PC-3 (cell line): ENCODE measurements at regions of chr3 and their contacts with region 1.

Region 1: GRCh38 chr3:190017521-190018288 is 103.0 kb downstream of the P3H2 start:
- DNase-seq: peak; percentile 90
- ATAC-seq: peak; percentile 74
- H3K4me3 ChIP-seq: peak overlapping the region; percentile 33; the same call in 1 of the 2 replicates
- H3K27ac ChIP-seq: no peak overlapping the region
- H3K4me1 ChIP-seq: peaks cover 28% of the 10 kb centered on the region
- H3K27me3 ChIP-seq: no peaks in the 10 kb centered on the region
- CTCF ChIP-seq: peak; percentile 86

Region 2: DNA sequence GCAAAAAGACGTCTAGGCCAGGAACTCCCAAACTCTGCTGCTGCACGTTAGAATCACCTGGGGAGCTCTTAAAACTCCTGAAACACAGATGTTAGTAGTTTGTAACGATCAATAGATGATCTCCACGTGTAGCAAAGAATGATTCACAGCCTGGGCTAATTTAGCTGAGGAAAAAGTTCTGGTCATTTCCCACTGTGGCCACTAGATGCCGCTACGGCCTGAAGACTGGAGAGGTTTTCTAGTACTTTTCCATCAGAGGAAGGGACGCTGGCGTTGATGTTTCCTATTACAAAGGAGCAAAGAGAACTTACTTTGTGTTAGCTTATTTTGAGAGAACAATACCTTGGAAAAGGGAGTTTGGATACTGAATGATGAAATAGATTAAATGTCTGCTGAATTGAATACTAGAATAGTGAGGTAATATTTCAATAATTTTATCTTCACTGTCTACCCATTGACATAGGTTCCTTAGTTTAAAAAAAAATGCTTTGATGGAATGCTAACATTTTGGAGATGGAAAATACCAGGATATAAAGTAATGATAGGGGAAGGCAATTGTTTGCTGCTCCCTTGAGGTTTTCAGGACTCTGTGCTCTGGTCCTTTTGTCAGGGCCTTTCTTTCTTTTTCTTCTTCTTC is 56.1 kb before region 1 on chr3:
- CTCF ChIA-PET with region 1: interaction called, 8 read pairs
- POLR2A ChIA-PET with region 1: no interaction called
- intact Hi-C with region 1: loop called (anchors 1 kb)
- DNase-seq: peak; percentile 95
- ATAC-seq: peak; percentile 82
- H3K4me3 ChIP-seq: no peak overlapping the region
- H3K27ac ChIP-seq: no peak overlapping the region
- H3K4me1 ChIP-seq: peaks cover 4% of the 10 kb centered on the region; the same call in 1 of the 2 replicates
- H3K27me3 ChIP-seq: no peaks in the 10 kb centered on the region
- CTCF ChIP-seq: peak; percentile 95

Region 3: GRCh38 chr3:190076601-190077396 is 59.1 kb after region 1 on chr3:
- CTCF ChIA-PET with region 1: interaction called, 3 read pairs
- POLR2A ChIA-PET with region 1: no interaction called
- intact Hi-C with region 1: loop called (anchors 2 kb)
- DNase-seq: peak; percentile 90
- ATAC-seq: peak; percentile 97
- H3K4me3 ChIP-seq: peak overlapping the region; percentile 26; the same call in 1 of the 2 replicates
- H3K27ac ChIP-seq: peak overlapping the region; percentile 68
- H3K4me1 ChIP-seq: peaks cover 24% of the 10 kb centered on the region
- H3K27me3 ChIP-seq: no peaks in the 10 kb centered on the region
- CTCF ChIP-seq: no peak

Region 4: GRCh38 chr3:190205739-190206138 is 188.0 kb after region 1 on chr3:
- CTCF ChIA-PET with region 1: no interaction called
- POLR2A ChIA-PET with region 1: no interaction called
- intact Hi-C with region 1: loop called (anchors 1 kb)
- DNase-seq: peak; percentile 53
- ATAC-seq: no peak; the same call in 1 of the 2 replicates
- H3K4me3 ChIP-seq: no peak overlapping the region
- H3K27ac ChIP-seq: no peak overlapping the region
- H3K4me1 ChIP-seq: peaks cover 9% of the 10 kb centered on the region; the same call in 1 of the 2 replicates
- H3K27me3 ChIP-seq: no peaks in the 10 kb centered on the region
- CTCF ChIP-seq: no peak

Region 5: GRCh38 chr3:190424478-190425439 is 407.1 kb after region 1 on chr3:
- CTCF ChIA-PET with region 1: no interaction called
- POLR2A ChIA-PET with region 1: no interaction called
- intact Hi-C with region 1: loop called (anchors 10 kb)
- DNase-seq: peak; percentile 78
- ATAC-seq: peak; percentile 82
- H3K4me3 ChIP-seq: no peak overlapping the region
- H3K27ac ChIP-seq: no peak overlapping the region
- H3K4me1 ChIP-seq: no peaks in the 10 kb centered on the region
- H3K27me3 ChIP-seq: no peaks in the 10 kb centered on the region
- CTCF ChIP-seq: peak; percentile 81

Region 6: DNA sequence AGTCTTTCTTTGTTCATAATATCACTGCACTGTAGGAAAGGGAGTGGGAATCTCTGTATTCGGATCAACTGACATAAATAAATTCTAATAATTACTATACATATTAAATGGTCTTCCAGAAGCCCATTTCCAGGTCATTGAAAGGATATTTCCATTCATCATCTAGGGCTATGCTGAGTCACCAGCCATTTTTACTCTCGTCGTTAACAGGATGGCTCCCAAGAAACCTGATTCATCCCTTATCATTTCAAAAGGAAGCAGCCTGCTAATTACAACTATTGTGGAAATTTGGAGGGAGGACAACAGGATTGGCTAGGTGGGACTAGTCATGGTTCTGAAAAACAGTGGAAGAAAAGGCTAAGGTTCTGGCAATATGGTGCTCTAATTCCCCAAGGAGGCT is 831.2 kb after region 1 on chr3:
- CTCF ChIA-PET with region 1: no interaction called
- POLR2A ChIA-PET with region 1: no interaction called
- intact Hi-C with region 1: no loop called
- DNase-seq: peak; percentile 37
- ATAC-seq: no peak; the same call in 1 of the 2 replicates
- H3K4me3 ChIP-seq: no peak overlapping the region
- H3K27ac ChIP-seq: no peak overlapping the region
- H3K4me1 ChIP-seq: no peaks in the 10 kb centered on the region
- H3K27me3 ChIP-seq: peaks cover 3% of the 10 kb centered on the region; the same call in 1 of the 2 replicates
- CTCF ChIP-seq: no peak